ENCODE measurements at regions of chr11 and their contacts with region 1.

Region 1: GRCh38 chr11:8092587-8093424 is 11.8 kb downstream of the TUB start:
- H3K4me3 ChIP-seq: no peak overlapping the region
- H3K27ac ChIP-seq: no peak overlapping the region
- H3K4me1 ChIP-seq: no peaks in the 10 kb centered on the region
- CTCF ChIP-seq: no peak

Region 2: GRCh38 chr11:8018484-8019313 is 74.1 kb before region 1 on chr11:
- CTCF ChIA-PET with region 1: interaction called, 26 read pairs
- POLR2A ChIA-PET with region 1: no interaction called
- H3K4me3 ChIP-seq: peak overlapping the region; percentile 61
- H3K27ac ChIP-seq: peak overlapping the region; percentile 48; the same call in 1 of the 2 replicates
- H3K4me1 ChIP-seq: no peaks in the 10 kb centered on the region
- CTCF ChIP-seq: no peak

Region 3: DNA sequence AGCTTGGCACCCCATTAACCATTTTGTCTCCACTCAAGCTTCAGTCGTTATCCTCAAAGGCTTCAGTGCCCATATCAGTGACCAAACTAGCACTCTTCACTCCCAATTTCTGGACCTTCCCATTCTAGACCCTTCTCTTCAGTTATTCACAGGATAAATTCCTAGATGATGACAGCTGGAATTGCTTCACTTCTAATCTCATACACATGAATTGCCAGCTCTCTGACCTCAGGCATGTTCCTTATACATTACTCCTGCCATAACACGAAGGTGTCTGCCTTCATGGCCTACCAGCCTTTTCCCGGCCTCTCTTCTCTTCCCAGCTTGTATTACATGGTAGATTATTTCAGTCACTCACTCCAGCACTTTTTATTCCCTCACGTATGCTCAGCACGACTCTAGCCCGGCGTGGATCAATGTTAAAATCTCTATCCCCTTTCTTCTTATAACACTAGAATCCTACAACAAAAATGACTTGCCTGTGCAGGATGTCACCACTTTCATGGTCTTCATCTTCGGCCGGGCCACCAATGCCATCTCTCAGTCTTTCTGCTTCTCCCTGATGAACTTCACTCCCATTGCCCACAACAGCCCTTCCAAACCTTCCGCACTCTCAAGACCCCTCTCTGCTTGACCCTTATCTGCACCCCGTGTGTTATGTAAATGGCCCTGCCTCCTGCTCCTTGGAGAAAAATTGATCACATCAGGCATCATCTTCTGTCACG is 68.8 kb before region 1 on chr11:
- CTCF ChIA-PET with region 1: interaction called, 374 read pairs
- POLR2A ChIA-PET with region 1: no interaction called
- H3K4me3 ChIP-seq: no peak overlapping the region
- H3K27ac ChIP-seq: no peak overlapping the region
- H3K4me1 ChIP-seq: no peaks in the 10 kb centered on the region
- CTCF ChIP-seq: no peak

Region 4: DNA sequence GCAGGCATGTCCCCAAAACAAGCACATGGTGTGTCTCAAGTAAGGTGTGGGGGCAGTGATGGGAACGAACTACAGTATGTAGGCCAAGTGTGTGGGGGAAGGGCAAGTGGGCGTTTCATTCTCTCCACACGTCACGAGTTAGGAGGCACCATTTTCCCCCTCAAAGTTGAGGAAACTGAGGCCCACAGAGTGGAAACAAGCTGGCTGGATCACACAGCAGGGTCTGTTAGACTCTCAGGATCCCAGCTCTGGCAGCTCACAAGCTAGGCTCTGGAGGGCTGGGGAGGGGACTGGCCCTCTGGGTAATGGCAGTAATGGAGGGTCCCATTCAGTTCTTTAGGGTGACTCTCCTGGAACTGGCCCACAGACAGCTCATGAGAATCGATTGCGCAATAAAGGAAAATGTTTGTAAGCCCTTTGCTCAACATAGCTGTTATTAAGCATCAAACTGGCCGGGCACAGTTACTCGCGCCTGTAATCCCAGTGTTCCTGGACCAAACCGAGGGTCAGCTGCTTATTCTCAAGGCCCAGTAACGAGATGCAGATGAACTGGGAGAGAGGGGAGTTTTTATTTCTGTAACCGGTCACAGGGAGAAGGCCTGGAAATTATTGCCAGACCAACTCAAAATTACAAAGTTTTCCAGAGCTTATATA is 35.9 kb before region 1 on chr11:
- CTCF ChIA-PET with region 1: interaction called, 23 read pairs
- POLR2A ChIA-PET with region 1: no interaction called
- H3K4me3 ChIP-seq: no peak overlapping the region
- H3K27ac ChIP-seq: no peak overlapping the region
- H3K4me1 ChIP-seq: no peaks in the 10 kb centered on the region
- CTCF ChIP-seq: no peak

Region 5: DNA sequence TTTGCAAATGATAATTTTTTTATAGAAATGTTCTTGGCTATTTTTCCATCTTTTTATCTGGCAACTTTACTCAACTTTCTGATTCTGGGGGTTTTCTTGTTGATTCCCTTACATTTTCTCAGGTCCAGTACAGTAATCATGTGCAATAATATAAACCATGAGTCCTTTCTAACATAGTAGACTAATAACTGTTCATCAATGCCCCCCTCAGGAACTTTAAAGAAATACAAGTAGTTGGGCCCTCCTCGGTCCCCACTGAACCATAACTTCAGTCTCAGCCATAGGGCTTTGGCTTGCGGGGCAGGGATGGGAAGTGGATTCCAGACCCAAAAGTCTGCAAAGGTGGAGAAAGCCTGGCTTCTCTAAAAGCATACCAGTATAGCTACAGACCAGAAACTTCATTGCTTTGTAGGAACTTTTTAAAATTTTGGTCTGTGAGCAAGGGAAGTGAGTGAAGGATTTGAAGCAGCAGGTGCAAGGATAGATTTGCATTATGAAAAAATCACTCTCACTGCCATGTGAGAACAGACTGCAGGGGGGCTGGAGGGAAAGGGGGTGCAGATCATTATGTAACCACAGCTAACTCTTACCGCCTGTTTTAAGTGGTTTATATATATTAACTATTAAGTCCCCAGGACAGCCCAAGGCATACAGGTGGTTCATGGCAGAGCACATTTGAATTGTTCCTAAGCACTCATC is 22.2 kb before region 1 on chr11:
- CTCF ChIA-PET with region 1: interaction called, 34 read pairs
- POLR2A ChIA-PET with region 1: interaction called, 4 read pairs
- H3K4me3 ChIP-seq: no peak overlapping the region
- H3K27ac ChIP-seq: no peak overlapping the region
- H3K4me1 ChIP-seq: peaks cover 8% of the 10 kb centered on the region
- CTCF ChIP-seq: no peak

Region 6: GRCh38 chr11:8080674-8081590 is 11.9 kb before region 1 on chr11 and contains the start of gene TUB:
- CTCF ChIA-PET with region 1: interaction called, 18 read pairs
- POLR2A ChIA-PET with region 1: interaction called, 4 read pairs
- H3K4me3 ChIP-seq: peak within 1 kb of the TSS; percentile 59
- H3K27ac ChIP-seq: peak within 1 kb of the TSS; percentile 42; the same call in 1 of the 2 replicates
- H3K4me1 ChIP-seq: peaks cover 6% of the 10 kb centered on the region; the same call in 1 of the 2 replicates
- CTCF ChIP-seq: peak; percentile 39; the same call in 1 of the 2 replicates

Region 7: GRCh38 chr11:8111636-8112035 is 18.8 kb after region 1 on chr11:
- CTCF ChIA-PET with region 1: interaction called, 38 read pairs
- POLR2A ChIA-PET with region 1: no interaction called
- H3K4me3 ChIP-seq: no peak overlapping the region
- H3K27ac ChIP-seq: no peak overlapping the region
- H3K4me1 ChIP-seq: no peaks in the 10 kb centered on the region
- CTCF ChIP-seq: no peak

Region 8: DNA sequence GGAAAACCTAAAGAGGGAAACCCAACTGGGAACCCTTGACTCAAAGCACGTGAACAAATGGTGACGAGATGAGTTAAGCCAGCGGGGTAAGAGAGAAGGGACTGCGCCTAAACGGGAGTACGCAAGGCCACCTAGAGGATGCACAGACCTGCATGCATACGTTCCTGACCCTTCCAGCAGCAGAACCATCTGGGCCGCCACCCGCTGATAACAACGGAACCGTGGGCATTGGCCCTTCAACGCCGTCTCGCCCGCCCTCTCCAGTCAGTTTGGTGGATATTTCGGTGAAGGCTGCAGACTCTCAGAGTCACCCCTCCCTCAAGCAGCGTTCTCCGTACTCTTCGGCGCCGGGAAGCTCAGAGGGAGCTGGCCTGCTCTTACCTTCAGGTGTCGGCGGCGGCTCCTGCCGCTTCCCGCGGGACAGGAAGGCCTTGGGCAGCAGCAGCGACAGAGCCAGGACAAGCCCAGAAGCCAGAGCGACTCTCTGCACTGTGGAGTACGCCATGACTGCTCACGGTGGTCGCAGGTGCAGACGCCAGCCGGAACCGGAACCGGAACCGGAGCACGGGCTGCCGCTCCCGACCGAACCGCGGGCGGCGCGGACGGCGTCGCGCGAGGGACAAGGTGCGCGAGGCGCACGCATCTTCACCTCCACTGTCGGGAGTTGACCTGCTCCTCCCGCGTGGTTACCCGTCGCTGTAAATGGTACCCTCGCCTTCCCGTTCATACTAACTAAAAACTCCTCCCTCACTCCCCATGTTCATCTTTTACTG is 75.9 kb after region 1 on chr11 and contains the start of gene RIC3:
- CTCF ChIA-PET with region 1: no interaction called
- POLR2A ChIA-PET with region 1: no interaction called
- H3K4me3 ChIP-seq: peak within 1 kb of the TSS; percentile 46
- H3K27ac ChIP-seq: peak within 1 kb of the TSS; percentile 24; the same call in 1 of the 2 replicates
- H3K4me1 ChIP-seq: no peaks in the 10 kb centered on the region; the same call in 1 of the 2 replicates
- CTCF ChIP-seq: 0 out of 2 replicates have a peak, but pooled peaks have one; percentile 7